Astrocyte of the cerebellum (primary cell): ENCODE measurements at regions of chr12 and their contacts with region 1.

Region 1: DNA sequence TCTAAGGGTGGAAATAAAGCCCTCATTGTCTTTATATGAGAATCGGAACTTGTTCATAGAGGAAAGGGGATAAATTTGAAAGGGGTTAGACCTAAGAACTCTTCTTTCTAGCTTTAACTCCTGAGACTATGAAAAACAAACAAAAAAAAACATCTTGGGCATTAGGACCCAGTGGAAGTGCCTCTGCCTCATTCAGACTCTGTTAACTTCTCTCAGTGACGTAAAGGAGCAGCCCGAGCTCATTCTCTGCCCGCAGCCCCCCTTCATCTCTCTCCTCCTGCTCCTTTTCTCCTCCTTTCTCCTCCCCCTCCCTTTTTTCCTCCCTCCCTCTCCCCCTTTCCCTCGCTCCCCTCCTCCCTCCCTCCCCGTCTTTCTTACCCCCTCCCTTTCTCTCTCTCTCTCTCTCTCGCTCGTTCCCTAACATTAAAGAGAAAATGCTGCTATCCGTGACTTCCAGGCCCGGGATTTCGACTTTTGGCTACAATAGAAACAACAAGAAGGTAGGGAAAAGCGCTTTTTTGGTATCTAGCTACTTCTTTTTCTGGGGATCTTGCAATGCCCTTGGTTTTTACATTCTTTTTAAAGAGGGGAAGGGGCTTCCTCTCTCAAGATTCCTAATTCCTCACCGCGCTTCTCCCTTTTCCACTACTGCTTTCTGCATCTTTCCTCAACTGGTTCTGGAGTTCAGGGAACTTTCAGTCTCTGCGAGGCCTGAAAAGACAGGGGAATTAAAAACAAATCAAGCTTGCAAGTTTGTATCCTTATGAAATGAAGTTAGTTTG is at the start of gene RBMS2:
- DNase-seq: peak; percentile 86
- H3K4me3 ChIP-seq: peak within 1 kb of the TSS; percentile 72
- CTCF ChIP-seq: no peak

Region 2: GRCh38 chr12:56450241-56450640 is 71.5 kb before region 1 on chr12:
- in situ Hi-C with region 1: loop called (anchors 10 kb)
- DNase-seq: no peak
- H3K4me3 ChIP-seq: no peak overlapping the region
- CTCF ChIP-seq: no peak

Region 3: GRCh38 chr12:56469007-56469930 is 52.5 kb before region 1 on chr12:
- in situ Hi-C with region 1: no loop called
- DNase-seq: no peak
- H3K4me3 ChIP-seq: peak overlapping the region; percentile 99
- CTCF ChIP-seq: no peak

Region 4: DNA sequence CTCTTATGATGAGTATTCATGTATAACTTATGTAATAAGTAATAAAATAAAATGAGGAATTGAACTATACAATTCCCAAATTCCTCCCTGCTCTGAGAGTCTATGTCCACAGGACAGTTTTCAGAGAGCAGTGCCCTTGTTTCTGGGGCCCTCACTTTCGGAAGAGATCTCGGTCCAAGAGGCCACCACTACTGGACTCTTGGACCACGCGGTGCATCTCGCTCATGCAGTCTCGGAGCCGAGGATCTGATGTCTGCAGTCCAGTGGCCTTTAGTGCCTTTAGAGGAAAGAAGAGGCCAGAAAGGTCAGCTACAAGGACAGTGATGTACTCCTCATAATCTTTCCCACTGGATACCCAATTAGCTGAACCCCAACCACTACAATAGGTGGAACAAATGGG is 42.2 kb before region 1 on chr12:
- in situ Hi-C with region 1: no loop called
- DNase-seq: no peak
- H3K4me3 ChIP-seq: no peak overlapping the region
- CTCF ChIP-seq: no peak

Region 5: DNA sequence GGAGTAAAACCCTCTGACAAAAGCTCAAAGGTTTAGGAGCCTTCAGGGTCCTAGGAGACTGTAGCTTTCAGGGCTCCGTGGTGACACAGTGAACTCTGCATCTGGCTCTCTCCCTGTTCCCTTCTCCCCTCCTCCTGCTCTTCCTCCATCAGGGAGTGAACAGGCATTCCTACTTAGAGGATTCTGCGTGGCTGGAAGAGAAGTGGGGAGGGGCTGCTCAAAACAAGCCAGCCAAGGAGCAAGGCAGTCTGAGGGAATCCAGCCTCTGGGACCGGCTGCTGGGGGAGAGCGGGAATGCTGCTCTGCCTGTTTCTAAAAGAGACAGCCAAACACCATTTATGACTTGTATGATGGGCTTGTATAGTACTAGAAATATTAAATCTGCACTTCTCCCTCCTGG is 49.3 kb after region 1 on chr12:
- in situ Hi-C with region 1: loop called (anchors 5 kb)
- DNase-seq: no peak
- H3K4me3 ChIP-seq: no peak overlapping the region
- CTCF ChIP-seq: no peak

Region 6: GRCh38 chr12:56622535-56622934 is 100.8 kb after region 1 on chr12:
- in situ Hi-C with region 1: loop called (anchors 5 kb)
- DNase-seq: no peak
- H3K4me3 ChIP-seq: no peak overlapping the region
- CTCF ChIP-seq: no peak